ENCODE measurements at regions of chr4 and their contacts with region 1.

Region 1: GRCh38 chr4:43132010-43132582 is 239.6 kb downstream of the GRXCR1 start:
- DNase-seq: peak; percentile 51 to 68
- H3K4me3 ChIP-seq: no peak overlapping the region
- H3K4me3 Mint-ChIP-seq: no peak overlapping the region
- H3K27ac Mint-ChIP-seq: no peak overlapping the region
- H3K4me1 ChIP-seq: no peaks in the 10 kb centered on the region
- H3K4me1 Mint-ChIP-seq: no peaks in the 10 kb centered on the region
- H3K27me3 ChIP-seq: no peaks in the 10 kb centered on the region
- H3K27me3 Mint-ChIP-seq: no peaks in the 10 kb centered on the region
- CTCF ChIP-seq: peak; percentile 73 to 78

Region 2: GRCh38 chr4:42881253-42881652 is 250.8 kb before region 1 on chr4:
- CTCF ChIA-PET with region 1: no interaction called
- POLR2A ChIA-PET with region 1: no interaction called
- intact Hi-C with region 1: no loop called
- DNase-seq: no peak
- H3K4me3 ChIP-seq: no peak overlapping the region
- H3K4me3 Mint-ChIP-seq: no peak overlapping the region
- H3K27ac Mint-ChIP-seq: no peak overlapping the region
- H3K4me1 ChIP-seq: no peaks in the 10 kb centered on the region
- H3K4me1 Mint-ChIP-seq: no peaks in the 10 kb centered on the region
- H3K27me3 ChIP-seq: no peaks in the 10 kb centered on the region
- H3K27me3 Mint-ChIP-seq: peaks cover 2% of the 10 kb centered on the region
- CTCF ChIP-seq: no peak

Region 3: DNA sequence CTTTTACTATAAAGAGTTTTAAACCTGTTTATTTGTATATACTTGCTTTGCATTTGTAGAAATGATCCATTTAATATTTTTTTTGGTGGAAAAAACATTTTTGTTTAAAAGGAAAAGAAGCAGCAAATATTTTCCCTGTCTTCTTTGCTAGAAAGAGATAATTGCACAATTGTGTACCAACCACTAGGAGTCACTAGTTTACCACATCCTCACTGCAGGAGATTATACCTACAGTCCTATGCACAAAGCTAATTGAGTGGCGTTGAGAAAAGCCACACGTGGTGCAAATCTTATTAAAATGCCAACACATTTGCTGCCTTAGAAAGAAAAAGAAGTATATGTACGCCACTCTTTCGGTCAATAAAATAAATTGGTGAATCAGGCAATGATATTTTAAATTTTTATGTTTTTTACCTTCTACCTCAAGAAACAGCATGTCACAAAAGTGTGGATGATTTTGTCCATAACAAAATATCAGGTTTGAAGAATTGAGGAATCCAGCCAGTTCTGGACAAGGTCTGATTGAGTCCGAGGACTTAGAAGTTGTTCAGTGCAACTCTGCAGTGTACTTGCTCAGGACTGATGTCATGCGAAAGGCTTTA is 136.7 kb before region 1 on chr4:
- CTCF ChIA-PET with region 1: no interaction called
- POLR2A ChIA-PET with region 1: no interaction called
- intact Hi-C with region 1: loop called (anchors 1 kb)
- DNase-seq: peak in 1 of 2 experiments; percentile 16
- H3K4me3 ChIP-seq: no peak overlapping the region
- H3K4me3 Mint-ChIP-seq: no peak overlapping the region
- H3K27ac Mint-ChIP-seq: no peak overlapping the region
- H3K4me1 ChIP-seq: no peaks in the 10 kb centered on the region
- H3K4me1 Mint-ChIP-seq: no peaks in the 10 kb centered on the region
- H3K27me3 ChIP-seq: no peaks in the 10 kb centered on the region
- H3K27me3 Mint-ChIP-seq: no peaks in the 10 kb centered on the region
- CTCF ChIP-seq: peak; percentile 56 to 58

Region 4: GRCh38 chr4:43331226-43332051 is 199.3 kb after region 1 on chr4:
- CTCF ChIA-PET with region 1: no interaction called
- POLR2A ChIA-PET with region 1: no interaction called
- intact Hi-C with region 1: no loop called
- DNase-seq: no peak
- H3K4me3 ChIP-seq: no peak overlapping the region
- H3K4me3 Mint-ChIP-seq: no peak overlapping the region
- H3K27ac Mint-ChIP-seq: no peak overlapping the region
- H3K4me1 ChIP-seq: no peaks in the 10 kb centered on the region
- H3K4me1 Mint-ChIP-seq: no peaks in the 10 kb centered on the region
- H3K27me3 ChIP-seq: no peaks in the 10 kb centered on the region
- H3K27me3 Mint-ChIP-seq: peaks cover 5% of the 10 kb centered on the region
- CTCF ChIP-seq: no peak

Region 5: GRCh38 chr4:43369036-43369594 is 237.0 kb after region 1 on chr4:
- CTCF ChIA-PET with region 1: no interaction called
- POLR2A ChIA-PET with region 1: no interaction called
- intact Hi-C with region 1: no loop called
- DNase-seq: no peak
- H3K4me3 ChIP-seq: no peak overlapping the region
- H3K4me3 Mint-ChIP-seq: no peak overlapping the region
- H3K27ac Mint-ChIP-seq: no peak overlapping the region
- H3K4me1 ChIP-seq: no peaks in the 10 kb centered on the region
- H3K4me1 Mint-ChIP-seq: no peaks in the 10 kb centered on the region
- H3K27me3 ChIP-seq: no peaks in the 10 kb centered on the region
- H3K27me3 Mint-ChIP-seq: peaks cover 2% of the 10 kb centered on the region
- CTCF ChIP-seq: no peak

Region 6: DNA sequence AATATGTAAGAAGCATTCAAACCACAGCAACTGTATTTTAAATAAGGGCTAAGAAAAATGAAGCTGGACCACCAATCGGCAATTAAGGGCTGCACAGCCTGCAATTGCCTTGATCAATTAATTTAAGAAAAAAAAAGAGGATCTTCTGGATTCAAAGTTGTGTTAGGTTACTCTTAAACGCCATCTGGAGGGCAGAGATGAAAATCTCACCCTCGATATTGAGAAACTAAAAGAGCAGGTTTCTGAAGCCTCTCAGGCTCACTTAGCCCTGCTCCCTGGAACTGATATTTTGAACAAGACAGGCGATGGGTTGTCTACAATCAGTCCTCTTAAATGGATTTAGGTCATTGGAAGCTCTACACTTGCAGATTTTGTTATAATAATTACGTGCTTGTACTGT is 339.9 kb after region 1 on chr4:
- CTCF ChIA-PET with region 1: no interaction called
- POLR2A ChIA-PET with region 1: no interaction called
- intact Hi-C with region 1: loop called (anchors 5 kb)
- DNase-seq: no peak
- H3K4me3 ChIP-seq: no peak overlapping the region
- H3K4me3 Mint-ChIP-seq: no peak overlapping the region
- H3K27ac Mint-ChIP-seq: no peak overlapping the region
- H3K4me1 ChIP-seq: no peaks in the 10 kb centered on the region
- H3K4me1 Mint-ChIP-seq: no peaks in the 10 kb centered on the region
- H3K27me3 ChIP-seq: no peaks in the 10 kb centered on the region
- H3K27me3 Mint-ChIP-seq: no peaks in the 10 kb centered on the region
- CTCF ChIP-seq: no peak

Region 7: DNA sequence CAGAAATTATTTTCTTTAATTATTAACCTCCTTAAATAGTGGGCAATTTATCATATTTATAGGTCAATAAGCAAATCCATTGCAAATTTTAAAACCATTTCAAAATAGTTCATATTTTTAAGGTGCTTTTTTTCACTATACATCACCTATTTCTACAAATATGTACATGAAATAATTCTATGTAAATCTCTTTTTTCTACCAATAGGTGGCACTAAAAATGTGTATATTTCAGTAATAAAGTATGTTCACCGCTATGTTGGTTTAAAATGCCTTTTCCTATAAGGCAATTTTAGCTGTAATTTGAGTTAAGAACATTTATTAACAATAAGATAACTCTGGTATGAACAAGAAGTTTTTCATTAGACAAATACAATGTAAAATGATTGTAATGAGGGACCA is 644.3 kb after region 1 on chr4:
- CTCF ChIA-PET with region 1: no interaction called
- POLR2A ChIA-PET with region 1: no interaction called
- intact Hi-C with region 1: loop called (anchors 10 kb)
- DNase-seq: no peak
- H3K4me3 ChIP-seq: no peak overlapping the region
- H3K4me3 Mint-ChIP-seq: no peak overlapping the region
- H3K27ac Mint-ChIP-seq: no peak overlapping the region
- H3K4me1 ChIP-seq: no peaks in the 10 kb centered on the region
- H3K4me1 Mint-ChIP-seq: no peaks in the 10 kb centered on the region
- H3K27me3 ChIP-seq: no peaks in the 10 kb centered on the region
- H3K27me3 Mint-ChIP-seq: no peaks in the 10 kb centered on the region
- CTCF ChIP-seq: peak in 1 of 2 experiments; percentile 28

Region 8: GRCh38 chr4:44425614-44426208 is 1293.6 kb after region 1 on chr4:
- CTCF ChIA-PET with region 1: no interaction called
- POLR2A ChIA-PET with region 1: no interaction called
- intact Hi-C with region 1: loop called (anchors 1 kb)
- DNase-seq: peak; percentile 25 to 47
- H3K4me3 ChIP-seq: no peak overlapping the region
- H3K4me3 Mint-ChIP-seq: no peak overlapping the region
- H3K27ac Mint-ChIP-seq: no peak overlapping the region
- H3K4me1 ChIP-seq: no peaks in the 10 kb centered on the region
- H3K4me1 Mint-ChIP-seq: no peaks in the 10 kb centered on the region
- H3K27me3 ChIP-seq: no peaks in the 10 kb centered on the region
- H3K27me3 Mint-ChIP-seq: peaks cover 2% of the 10 kb centered on the region
- CTCF ChIP-seq: peak; percentile 42 to 57

Region 9: DNA sequence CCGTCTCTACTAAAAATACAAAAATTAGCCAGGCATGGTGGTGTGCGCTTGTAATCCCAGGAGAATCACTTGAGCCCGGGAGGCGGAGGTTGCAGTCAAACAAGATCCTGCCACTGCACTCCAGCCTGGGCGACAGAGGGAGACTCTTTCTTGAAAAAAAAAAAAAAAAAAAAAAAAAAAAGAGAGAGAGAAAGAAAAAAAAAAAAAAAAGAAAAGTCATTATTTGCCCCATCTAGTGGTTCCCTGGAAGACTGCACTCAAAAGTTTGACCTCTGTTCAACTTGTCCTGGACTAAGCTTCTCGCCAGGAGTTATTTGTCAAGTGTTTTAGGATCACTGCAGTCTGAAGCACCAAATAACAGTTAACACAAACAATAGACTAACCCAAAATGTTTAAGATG is 1361.8 kb after region 1 on chr4:
- CTCF ChIA-PET with region 1: interaction called, 3 read pairs
- POLR2A ChIA-PET with region 1: no interaction called
- intact Hi-C with region 1: loop called (anchors 5 kb)
- DNase-seq: peak in 1 of 2 experiments; percentile 22
- H3K4me3 ChIP-seq: no peak overlapping the region
- H3K4me3 Mint-ChIP-seq: no peak overlapping the region
- H3K27ac Mint-ChIP-seq: no peak overlapping the region
- H3K4me1 ChIP-seq: no peaks in the 10 kb centered on the region
- H3K4me1 Mint-ChIP-seq: no peaks in the 10 kb centered on the region
- H3K27me3 ChIP-seq: no peaks in the 10 kb centered on the region
- H3K27me3 Mint-ChIP-seq: no peaks in the 10 kb centered on the region
- CTCF ChIP-seq: peak; percentile 18 to 57

Region 10: DNA sequence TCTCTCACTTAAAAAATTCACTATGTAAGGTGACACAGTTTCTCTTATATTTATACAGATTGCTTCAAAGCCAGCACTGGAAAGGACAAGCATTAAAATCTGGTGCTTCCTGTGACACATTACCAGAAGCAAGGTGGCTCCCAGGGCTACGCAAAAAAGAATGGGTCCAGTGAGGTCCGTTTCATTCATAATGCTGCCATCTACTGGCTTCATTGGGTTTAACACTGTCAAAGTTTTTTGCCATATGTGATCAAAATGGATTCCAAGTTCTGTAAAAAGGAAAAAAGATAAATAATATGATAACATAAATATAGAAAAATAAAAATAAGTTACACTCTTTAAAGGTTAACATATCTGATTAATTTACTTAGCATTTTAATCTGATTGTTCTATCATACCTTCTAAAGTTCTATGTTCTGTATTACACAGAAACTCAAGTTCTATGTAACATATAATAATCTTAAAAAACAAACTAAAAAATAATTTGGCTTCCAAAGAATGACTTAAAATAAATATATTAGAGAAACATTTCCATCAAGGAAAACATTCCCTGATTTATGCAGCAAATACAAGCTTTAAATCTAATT is 1497.3 kb after region 1 on chr4:
- CTCF ChIA-PET with region 1: no interaction called
- POLR2A ChIA-PET with region 1: no interaction called
- intact Hi-C with region 1: loop called (anchors 1 kb)
- DNase-seq: peak; percentile 38 to 49
- H3K4me3 ChIP-seq: no peak overlapping the region
- H3K4me3 Mint-ChIP-seq: no peak overlapping the region
- H3K27ac Mint-ChIP-seq: no peak overlapping the region
- H3K4me1 ChIP-seq: no peaks in the 10 kb centered on the region
- H3K4me1 Mint-ChIP-seq: no peaks in the 10 kb centered on the region
- H3K27me3 ChIP-seq: no peaks in the 10 kb centered on the region; the same call in 1 of the 2 replicates
- H3K27me3 Mint-ChIP-seq: peaks cover 2% of the 10 kb centered on the region
- CTCF ChIP-seq: peak; percentile 55 to 67

Measured in Caco-2 (cell line).